Activated CD4-positive, alpha-beta memory T cell treated with anti-CD3 and anti-CD28 coated beads, Interleukin-2, amount 10 ng/mL, durations not matched to agents 7 days and 5 days (primary cell): ENCODE measurements at regions of chr15 and their contacts with region 1.

Region 1: GRCh38 chr15:44738340-44738984 is 2.1 kb downstream of the TRIM69 start:
- DNase-seq: no peak
- H3K4me3 Mint-ChIP-seq: peak overlapping the region; percentile 51
- H3K27ac Mint-ChIP-seq: peak overlapping the region; percentile 78
- H3K4me1 Mint-ChIP-seq: peaks cover 55% of the 10 kb centered on the region
- H3K27me3 Mint-ChIP-seq: no peaks in the 10 kb centered on the region

Region 2: DNA sequence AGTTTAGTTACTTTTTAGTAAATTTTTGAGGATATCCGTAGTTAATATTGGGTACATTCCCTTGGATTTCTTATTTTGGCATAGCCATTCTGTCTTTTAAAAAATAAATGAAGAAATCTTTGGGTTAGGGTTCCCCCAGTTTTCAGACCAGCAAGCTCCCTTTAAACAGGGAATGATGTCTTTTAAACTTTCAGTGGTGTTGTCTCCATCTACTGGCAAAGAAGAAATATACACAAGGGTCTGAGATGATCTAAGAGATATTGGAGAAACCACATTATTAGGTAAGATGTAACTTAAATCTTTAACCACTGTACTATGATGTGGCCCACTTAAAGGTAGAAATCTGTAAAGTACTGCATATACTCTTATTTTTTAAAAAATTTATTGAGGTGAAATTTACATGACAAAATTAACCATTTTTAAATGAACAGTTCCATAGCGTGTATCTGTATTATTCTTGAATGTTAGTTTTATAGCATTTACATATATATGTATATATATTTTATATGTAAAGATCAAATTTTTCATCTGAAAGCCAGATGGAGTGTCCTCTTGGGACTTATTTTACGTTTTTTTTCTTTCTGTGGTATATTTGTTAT is 236.6 kb before region 1 on chr15:
- CTCF ChIA-PET with region 1: no interaction called
- POLR2A ChIA-PET with region 1: no interaction called
- DNase-seq: no peak
- H3K4me3 Mint-ChIP-seq: no peak overlapping the region
- H3K27ac Mint-ChIP-seq: no peak overlapping the region
- H3K4me1 Mint-ChIP-seq: peaks cover 20% of the 10 kb centered on the region
- H3K27me3 Mint-ChIP-seq: no peaks in the 10 kb centered on the region

Region 3: DNA sequence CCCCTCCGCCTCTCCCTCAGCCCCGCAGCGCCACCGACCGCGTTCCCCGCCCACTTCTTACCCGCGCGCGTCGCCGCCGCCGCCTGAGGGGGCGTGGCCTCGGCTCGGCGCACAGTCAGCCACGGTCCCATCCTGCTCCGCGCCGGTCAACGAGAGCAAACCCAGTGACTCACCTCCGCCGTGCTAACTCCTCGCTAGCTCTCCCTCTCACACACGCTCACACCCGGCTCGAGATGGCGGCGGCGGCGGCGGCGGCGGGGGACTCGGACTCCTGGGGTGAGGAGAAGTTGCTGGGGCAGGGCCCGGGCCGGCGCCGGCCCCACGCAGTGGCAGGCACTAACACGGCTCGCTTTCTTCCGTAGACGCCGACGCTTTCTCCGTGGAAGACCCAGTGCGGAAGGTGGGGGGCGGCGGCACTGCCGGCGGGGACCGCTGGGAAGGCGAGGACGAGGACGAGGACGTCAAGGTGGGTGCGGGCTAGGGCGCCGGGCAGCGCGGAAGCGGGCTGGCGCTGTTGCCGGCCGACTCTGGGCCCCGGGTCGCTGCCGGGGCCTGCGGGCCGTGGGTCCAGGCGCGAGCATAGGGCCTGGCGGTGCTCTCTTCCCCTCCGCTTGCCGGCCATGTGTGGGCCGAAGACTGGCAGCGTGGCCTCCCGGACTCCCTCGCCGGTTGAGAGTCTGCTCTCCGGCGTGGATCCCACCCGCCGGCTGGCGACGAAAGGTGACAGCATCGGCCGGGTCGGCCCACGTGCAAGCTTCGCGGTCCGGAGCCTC is 201.3 kb before region 1 on chr15 and contains the start of gene EIF3J:
- CTCF ChIA-PET with region 1: interaction called, 4 read pairs
- POLR2A ChIA-PET with region 1: interaction called, 12 read pairs
- DNase-seq: peak; percentile 96
- H3K4me3 Mint-ChIP-seq: peak within 1 kb of the TSS; percentile 84
- H3K27ac Mint-ChIP-seq: peak within 1 kb of the TSS; percentile 95
- H3K4me1 Mint-ChIP-seq: peaks cover 56% of the 10 kb centered on the region
- H3K27me3 Mint-ChIP-seq: no peaks in the 10 kb centered on the region
- total RNA-seq, gene EIF3J: 70.6 to 87.8 TPM

Region 4: DNA sequence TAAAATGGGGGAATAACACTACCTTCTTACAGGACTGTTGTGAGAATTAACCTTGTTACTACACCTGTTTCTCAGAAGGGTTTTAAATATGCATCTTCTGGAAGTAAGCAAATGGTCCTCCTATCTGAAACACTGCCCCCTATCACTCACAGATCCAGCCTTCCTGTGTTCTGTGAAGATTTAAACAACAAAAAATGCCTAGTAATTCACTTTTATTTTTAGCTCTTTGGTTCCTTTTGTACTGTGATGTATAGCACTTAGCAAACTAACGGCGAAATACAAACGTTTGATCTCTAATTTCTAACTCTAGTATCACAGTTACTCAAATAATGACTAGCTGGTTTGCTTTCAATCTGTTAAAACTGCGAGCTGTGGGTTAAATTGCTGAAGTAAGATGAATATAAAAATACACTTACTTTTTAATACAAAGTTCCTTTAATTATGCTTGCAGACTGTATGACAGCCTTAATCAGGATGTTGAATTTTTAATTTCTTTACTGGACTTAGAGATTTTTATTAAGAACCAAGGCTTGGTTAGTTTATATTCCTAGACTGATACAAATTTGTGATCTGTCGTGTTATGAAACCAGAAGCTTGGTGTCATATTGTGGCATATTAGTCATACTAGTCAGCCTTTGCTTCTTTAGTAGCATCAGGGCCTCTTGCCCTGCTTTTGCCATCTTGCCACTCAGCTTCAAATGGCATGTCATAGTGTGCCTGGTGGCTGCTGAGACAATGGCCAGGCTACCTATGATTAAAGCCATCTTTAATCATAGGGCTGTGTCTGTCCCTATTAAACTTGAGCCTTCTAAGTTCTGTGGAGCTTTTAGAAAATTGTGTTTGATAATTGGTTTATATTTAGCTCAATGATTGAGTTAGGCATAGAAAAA is 192.3 kb before region 1 on chr15:
- CTCF ChIA-PET with region 1: interaction called, 4 read pairs
- POLR2A ChIA-PET with region 1: interaction called, 11 read pairs
- DNase-seq: peak; percentile 64
- H3K4me3 Mint-ChIP-seq: peak overlapping the region; percentile 72
- H3K27ac Mint-ChIP-seq: peak overlapping the region; percentile 97
- H3K4me1 Mint-ChIP-seq: peaks cover 55% of the 10 kb centered on the region
- H3K27me3 Mint-ChIP-seq: no peaks in the 10 kb centered on the region

Region 5: DNA sequence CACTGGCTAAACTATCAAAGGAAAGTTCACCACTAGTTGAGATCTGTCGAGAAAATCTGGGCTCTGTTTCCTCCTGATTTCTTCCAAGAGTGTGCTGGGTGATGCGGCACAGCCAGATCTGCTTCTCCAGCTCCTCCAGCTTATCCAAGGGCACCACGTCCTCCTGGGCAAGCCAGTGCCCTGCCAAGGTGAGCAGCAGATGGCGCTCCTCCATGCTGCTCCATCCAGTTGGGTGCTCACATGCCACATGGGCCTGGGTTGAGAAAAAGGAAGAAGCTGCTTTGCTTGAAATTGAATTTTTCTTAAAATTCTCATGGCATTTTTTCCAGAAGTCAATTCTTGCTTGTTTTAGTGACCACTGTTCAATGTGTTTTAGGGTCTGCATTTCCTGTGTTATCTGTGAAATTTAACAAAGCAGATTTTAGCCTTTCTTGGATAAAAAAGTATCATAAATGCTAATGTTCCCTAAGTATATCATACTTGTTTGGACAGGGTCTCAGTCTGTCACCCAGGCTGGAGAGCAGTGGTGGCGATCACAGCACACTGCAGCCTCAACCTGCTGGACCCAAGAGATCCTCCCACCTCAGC is 154.2 kb before region 1 on chr15:
- CTCF ChIA-PET with region 1: interaction called, 58 read pairs
- POLR2A ChIA-PET with region 1: interaction called, 15 read pairs
- DNase-seq: peak; percentile 70
- H3K4me3 Mint-ChIP-seq: no peak overlapping the region
- H3K27ac Mint-ChIP-seq: no peak overlapping the region
- H3K4me1 Mint-ChIP-seq: peaks cover 14% of the 10 kb centered on the region
- H3K27me3 Mint-ChIP-seq: no peaks in the 10 kb centered on the region

Region 6: GRCh38 chr15:44593042-44593736 is 145.3 kb before region 1 on chr15:
- CTCF ChIA-PET with region 1: interaction called, 110 read pairs
- POLR2A ChIA-PET with region 1: interaction called, 28 read pairs
- DNase-seq: peak; percentile 20
- H3K4me3 Mint-ChIP-seq: no peak overlapping the region
- H3K27ac Mint-ChIP-seq: peak overlapping the region; percentile 37
- H3K4me1 Mint-ChIP-seq: peaks cover 34% of the 10 kb centered on the region
- H3K27me3 Mint-ChIP-seq: no peaks in the 10 kb centered on the region

Region 7: DNA sequence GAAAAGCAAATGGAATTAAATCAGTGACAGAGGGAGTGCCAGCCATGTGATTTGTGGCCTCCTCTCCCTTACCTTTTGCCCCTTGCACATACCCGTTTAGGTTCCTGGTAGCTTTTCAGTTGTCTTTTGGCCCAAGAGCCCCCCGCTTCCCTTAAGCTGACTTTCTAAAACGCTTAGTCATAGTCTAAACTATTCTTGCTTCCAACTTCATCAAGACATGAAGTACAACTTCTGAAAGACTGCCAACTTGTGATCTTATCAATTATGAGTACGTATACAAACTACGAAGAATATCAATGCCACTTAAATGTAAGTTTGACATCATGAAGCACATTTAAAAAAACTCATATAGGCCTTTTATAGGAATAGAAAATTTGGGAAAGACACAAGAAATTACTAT is 139.6 kb before region 1 on chr15:
- CTCF ChIA-PET with region 1: interaction called, 110 read pairs
- POLR2A ChIA-PET with region 1: interaction called, 28 read pairs
- DNase-seq: no peak
- H3K4me3 Mint-ChIP-seq: no peak overlapping the region
- H3K27ac Mint-ChIP-seq: peak overlapping the region; percentile 77
- H3K4me1 Mint-ChIP-seq: peaks cover 38% of the 10 kb centered on the region
- H3K27me3 Mint-ChIP-seq: no peaks in the 10 kb centered on the region

Region 8: GRCh38 chr15:44798826-44799225 is 60.4 kb after region 1 on chr15:
- CTCF ChIA-PET with region 1: no interaction called
- POLR2A ChIA-PET with region 1: no interaction called
- DNase-seq: no peak
- H3K4me3 Mint-ChIP-seq: no peak overlapping the region
- H3K27ac Mint-ChIP-seq: no peak overlapping the region
- H3K4me1 Mint-ChIP-seq: peaks cover 9% of the 10 kb centered on the region
- H3K27me3 Mint-ChIP-seq: peaks cover 5% of the 10 kb centered on the region